ENCODE measurements at regions of chr18 and their contacts with region 1.

Region 1: DNA sequence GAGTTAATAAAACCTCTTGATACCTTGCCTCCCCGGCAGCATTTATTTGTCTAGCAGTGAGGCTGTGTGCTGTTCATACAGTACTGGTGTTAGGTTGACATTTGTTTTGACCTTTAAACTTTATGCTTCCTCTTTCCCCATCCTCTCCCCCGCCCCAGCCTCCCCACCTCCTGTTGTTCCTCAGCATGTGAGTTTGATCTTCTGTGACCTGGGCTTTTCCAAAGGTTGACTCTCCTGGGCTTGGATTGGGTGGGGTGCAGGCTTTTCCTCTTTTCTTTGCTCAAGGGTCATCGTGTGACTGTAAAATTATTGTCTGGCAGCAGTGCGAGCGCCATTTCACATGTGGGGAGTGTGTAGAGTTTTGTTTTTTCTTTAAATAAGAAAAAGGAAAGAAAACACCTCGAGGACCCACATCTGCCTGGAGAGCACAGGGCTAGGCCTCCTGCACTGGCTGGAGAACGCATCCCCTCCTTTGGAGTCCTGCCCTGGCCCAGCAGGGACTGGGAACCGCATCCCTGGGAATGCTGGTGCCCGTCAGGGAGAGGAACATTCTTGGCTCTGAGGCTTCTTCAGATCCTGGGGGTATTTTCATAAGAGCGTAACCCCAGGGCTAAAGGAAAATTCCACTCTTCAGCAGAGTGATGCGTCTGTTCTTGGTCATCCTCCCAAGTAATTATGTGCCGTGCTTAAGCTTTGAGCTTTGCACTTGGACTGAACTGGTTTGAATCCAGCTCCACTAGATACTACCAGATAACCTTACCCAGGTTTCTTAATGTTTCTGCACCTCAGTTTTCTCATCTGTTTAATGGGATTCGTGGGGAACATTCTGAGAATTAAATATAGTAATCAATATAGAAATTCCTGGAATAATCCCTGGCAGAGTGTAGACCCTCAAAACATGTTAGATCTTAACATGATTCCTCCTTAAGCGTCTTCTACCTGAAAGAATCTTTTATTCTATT is 91.5 kb downstream of the SETBP1 start:
- DNase-seq: no peak
- ATAC-seq: peak; percentile 34 to 79 (median 72)
- H3K4me3 ChIP-seq: no peak overlapping the region
- H3K27ac ChIP-seq: peak overlapping the region in 7 of 12 donors; percentile 4 to 70 (median 41)
- H3K4me1 ChIP-seq: peaks cover 0 to 47% (median 16%) of the 10 kb centered on the region in 12 donors
- H3K27me3 ChIP-seq: no peaks in the 10 kb centered on the region
- CTCF ChIP-seq: no peak
- POLR2A ChIP-seq: no peak

Region 2: GRCh38 chr18:44067186-44067585 is 705.1 kb before region 1 on chr18:
- intact Hi-C with region 1: no loop called
- DNase-seq: no peak
- ATAC-seq: no peak
- H3K4me3 ChIP-seq: no peak overlapping the region
- H3K27ac ChIP-seq: no peak overlapping the region
- H3K4me1 ChIP-seq: no peaks in the 10 kb centered on the region
- H3K27me3 ChIP-seq: no peaks in the 10 kb centered on the region
- CTCF ChIP-seq: no peak
- POLR2A ChIP-seq: no peak

Region 3: DNA sequence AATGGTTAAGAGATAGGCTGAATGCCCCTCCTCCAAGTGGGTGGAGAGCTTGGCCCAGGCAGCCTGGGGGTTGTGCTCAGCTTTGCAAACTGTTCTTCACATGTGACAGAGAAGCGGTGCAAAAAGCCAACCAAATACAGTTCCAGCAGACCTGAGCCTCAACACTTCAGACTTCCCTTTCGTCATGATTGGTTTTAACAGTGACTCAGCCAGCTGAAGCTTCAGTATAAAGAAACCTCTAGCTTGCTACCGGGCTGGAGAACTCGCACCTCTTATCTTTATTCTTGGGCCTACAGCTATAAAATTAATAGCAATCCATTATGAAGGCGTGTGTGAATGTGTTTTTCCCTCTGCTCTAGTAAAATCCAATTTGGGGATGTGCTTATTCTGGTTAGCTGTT is 71.6 kb before region 1 on chr18:
- intact Hi-C with region 1: loop called in 1 of 10 experiments (anchors 10 kb)
- DNase-seq: no peak
- ATAC-seq: peak; percentile 32 to 75 (median 62)
- H3K4me3 ChIP-seq: no peak overlapping the region
- H3K27ac ChIP-seq: peak overlapping the region in 6 of 12 donors; percentile 23 to 79 (median 44)
- H3K4me1 ChIP-seq: peaks cover 0 to 55% (median 24%) of the 10 kb centered on the region in 12 donors
- H3K27me3 ChIP-seq: no peaks in the 10 kb centered on the region
- CTCF ChIP-seq: no peak
- POLR2A ChIP-seq: no peak